PC-9 (cell line): ENCODE measurements at regions of chr1 and their contacts with region 1.

Region 1: GRCh38 chr1:183622884-183623785 is 12.4 kb downstream of the ARPC5 start:
- DNase-seq: peak; percentile 60 to 65
- H3K4me3 ChIP-seq: no peak overlapping the region
- H3K27ac ChIP-seq: peak overlapping the region; percentile 64
- H3K4me1 ChIP-seq: peaks cover 33% of the 10 kb centered on the region
- H3K27me3 ChIP-seq: no peaks in the 10 kb centered on the region
- CTCF ChIP-seq: peak; percentile 87

Region 2: GRCh38 chr1:182604169-182605164 is 1018.7 kb before region 1 on chr1 and contains the start of gene RGS16:
- CTCF ChIA-PET with region 1: no interaction called
- POLR2A ChIA-PET with region 1: no interaction called
- intact Hi-C with region 1: loop called (anchors 5 kb)
- DNase-seq: peak; percentile 62 to 80
- H3K4me3 ChIP-seq: peak within 1 kb of the TSS; percentile 69
- H3K27ac ChIP-seq: no peak within 1 kb of the TSS
- H3K4me1 ChIP-seq: peaks cover 15% of the 10 kb centered on the region
- H3K27me3 ChIP-seq: no peaks in the 10 kb centered on the region
- CTCF ChIP-seq: no peak
- total RNA-seq, gene RGS16: 0.25 TPM in 1 of 2 replicates, not detected in the other

Region 3: GRCh38 chr1:182855911-182856310 is 767.2 kb before region 1 on chr1:
- CTCF ChIA-PET with region 1: no interaction called
- POLR2A ChIA-PET with region 1: no interaction called
- intact Hi-C with region 1: loop called (anchors 10 kb)
- DNase-seq: no peak
- H3K4me3 ChIP-seq: no peak overlapping the region
- H3K27ac ChIP-seq: no peak overlapping the region
- H3K4me1 ChIP-seq: no peaks in the 10 kb centered on the region
- H3K27me3 ChIP-seq: no peaks in the 10 kb centered on the region
- CTCF ChIP-seq: no peak

Region 4: DNA sequence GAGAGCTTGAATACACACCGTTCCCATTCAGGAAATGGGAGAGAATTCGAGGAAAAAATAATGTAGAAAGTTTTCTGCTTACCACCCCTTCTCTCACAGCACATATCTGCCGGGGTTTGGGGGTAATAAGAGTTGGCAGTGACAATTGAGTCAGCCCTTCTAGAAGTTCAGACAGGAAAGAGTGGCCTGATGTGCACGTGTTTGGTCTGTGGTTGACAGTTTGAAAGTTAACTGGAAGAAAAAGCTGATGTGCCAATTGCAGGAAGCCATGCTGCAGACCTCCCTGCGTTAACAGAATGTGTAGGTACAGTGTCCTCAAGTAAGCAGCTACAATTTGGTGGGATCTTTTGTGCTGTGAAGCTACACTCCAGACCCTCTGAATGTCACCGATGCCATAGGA is 733.1 kb before region 1 on chr1:
- CTCF ChIA-PET with region 1: no interaction called
- POLR2A ChIA-PET with region 1: no interaction called
- intact Hi-C with region 1: loop called (anchors 10 kb)
- DNase-seq: no peak
- H3K4me3 ChIP-seq: no peak overlapping the region
- H3K27ac ChIP-seq: no peak overlapping the region
- H3K4me1 ChIP-seq: peaks cover 13% of the 10 kb centered on the region
- H3K27me3 ChIP-seq: no peaks in the 10 kb centered on the region
- CTCF ChIP-seq: no peak

Region 5: GRCh38 chr1:183195142-183195574 is 428.0 kb before region 1 on chr1:
- CTCF ChIA-PET with region 1: no interaction called
- POLR2A ChIA-PET with region 1: no interaction called
- intact Hi-C with region 1: no loop called
- DNase-seq: peak; percentile 34 to 86
- H3K4me3 ChIP-seq: no peak overlapping the region
- H3K27ac ChIP-seq: peak overlapping the region; percentile 89
- H3K4me1 ChIP-seq: peaks cover 26% of the 10 kb centered on the region
- H3K27me3 ChIP-seq: no peaks in the 10 kb centered on the region
- CTCF ChIP-seq: no peak

Region 6: DNA sequence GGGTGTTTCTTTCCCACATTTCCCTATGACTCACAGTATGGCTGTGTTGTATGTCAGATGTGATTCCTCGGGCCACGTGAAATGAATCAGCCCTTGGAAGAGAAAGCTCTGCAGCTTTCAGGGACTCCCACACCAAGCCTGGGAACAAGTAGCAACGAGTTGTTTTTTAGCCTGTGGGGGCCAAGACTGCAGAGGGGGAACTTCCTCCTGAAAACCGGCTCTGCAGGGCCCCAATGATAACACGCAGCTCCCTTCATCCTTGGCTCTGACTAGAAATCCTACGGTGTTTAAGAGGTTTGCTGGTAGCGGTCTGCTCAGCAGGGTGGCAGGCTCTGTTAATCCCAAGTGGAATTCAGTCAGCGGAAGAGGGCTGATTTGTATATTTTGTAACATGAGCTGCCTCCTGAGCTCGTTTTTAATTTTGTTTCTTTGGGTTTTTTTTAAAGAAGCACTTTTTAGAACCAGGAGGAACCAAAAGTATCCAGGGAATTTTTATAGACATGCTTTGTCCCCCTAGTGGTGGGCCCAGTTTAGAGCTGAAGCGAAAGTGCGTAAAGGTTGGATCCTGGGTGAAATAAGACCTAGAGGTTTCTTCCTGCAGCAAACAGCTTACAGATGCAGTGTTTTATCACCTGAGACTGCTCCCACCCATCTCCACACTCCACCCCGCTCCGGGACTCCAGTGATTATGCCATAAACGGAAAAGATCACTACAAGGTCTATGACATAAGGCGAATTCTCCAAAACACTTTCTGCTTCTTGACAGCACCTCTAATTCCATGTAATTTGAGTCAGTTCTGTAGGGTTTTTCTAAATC is 388.3 kb before region 1 on chr1:
- CTCF ChIA-PET with region 1: interaction called, 3 read pairs
- POLR2A ChIA-PET with region 1: no interaction called
- intact Hi-C with region 1: loop called (anchors 2 kb)
- DNase-seq: peak; percentile 81 to 96
- H3K4me3 ChIP-seq: peak overlapping the region; percentile 45; the same call in 1 of the 2 replicates
- H3K27ac ChIP-seq: peak overlapping the region; percentile 92
- H3K4me1 ChIP-seq: peaks cover 41% of the 10 kb centered on the region
- H3K27me3 ChIP-seq: no peaks in the 10 kb centered on the region
- CTCF ChIP-seq: peak; percentile 77

Region 7: DNA sequence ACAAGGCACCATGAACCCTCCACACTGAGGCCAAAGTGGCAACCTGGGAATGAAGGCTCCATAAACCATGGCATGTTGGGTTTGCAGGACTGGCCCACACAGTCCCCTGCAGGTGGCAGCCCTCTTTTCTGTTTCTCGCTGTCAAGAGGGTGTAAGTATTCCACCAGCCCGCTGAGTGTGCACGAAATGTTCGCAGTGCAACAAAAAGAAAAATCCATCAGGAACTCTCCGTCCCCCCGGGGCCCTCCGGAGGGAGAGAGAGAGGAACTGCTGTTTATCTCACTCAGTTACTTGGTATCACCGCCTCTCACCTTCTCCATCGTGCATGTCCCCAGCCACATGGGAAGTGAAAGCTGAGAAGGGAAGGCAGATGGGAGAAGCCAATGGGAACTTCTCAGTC is 71.2 kb before region 1 on chr1:
- CTCF ChIA-PET with region 1: no interaction called
- POLR2A ChIA-PET with region 1: no interaction called
- intact Hi-C with region 1: loop called (anchors 2 kb)
- DNase-seq: no peak
- H3K4me3 ChIP-seq: no peak overlapping the region
- H3K27ac ChIP-seq: no peak overlapping the region
- H3K4me1 ChIP-seq: no peaks in the 10 kb centered on the region
- H3K27me3 ChIP-seq: no peaks in the 10 kb centered on the region
- CTCF ChIP-seq: no peak

Region 8: DNA sequence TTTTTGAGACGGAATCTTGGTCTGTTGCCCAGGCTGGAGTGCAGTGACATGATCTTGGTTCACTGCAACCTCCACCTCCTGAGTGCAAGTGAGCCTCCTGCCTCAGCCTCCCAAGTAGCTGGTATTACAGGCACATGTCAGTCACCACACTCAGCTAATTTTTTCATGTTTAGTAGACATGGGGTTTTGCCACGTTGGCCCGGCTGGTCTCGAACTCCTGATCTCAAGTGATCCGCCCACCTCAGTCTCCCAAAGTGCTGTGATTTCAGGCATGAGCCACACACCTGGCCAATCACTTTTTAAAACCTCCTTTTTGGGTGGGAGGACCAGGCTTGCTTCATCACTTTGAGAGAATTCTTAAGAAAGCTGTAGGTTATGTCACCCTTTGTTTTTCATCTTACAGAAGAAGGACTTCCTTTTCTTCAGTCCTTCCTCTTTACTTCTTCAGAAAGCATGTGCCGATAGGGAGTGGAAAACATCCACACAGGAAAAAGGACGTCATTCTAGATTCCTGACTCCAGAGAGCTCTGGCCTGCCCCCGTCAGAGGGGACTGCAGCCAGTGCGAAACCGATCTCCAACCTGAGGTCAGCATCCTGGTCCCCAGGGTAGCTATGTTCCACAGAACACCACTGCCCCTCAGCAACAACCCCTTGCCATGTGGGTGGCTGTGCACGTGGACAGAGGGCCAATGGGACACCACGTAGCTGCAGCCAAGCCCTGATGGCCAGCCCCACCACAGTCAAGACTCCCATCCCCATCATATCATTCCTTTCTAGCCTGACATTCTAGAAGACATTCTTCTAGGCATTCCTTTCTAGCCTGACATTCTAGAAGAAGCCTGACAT is 54.7 kb before region 1 on chr1:
- CTCF ChIA-PET with region 1: no interaction called
- POLR2A ChIA-PET with region 1: interaction called, 6 read pairs
- intact Hi-C with region 1: loop called (anchors 2 kb)
- DNase-seq: peak in 1 of 2 experiments; percentile 38
- H3K4me3 ChIP-seq: peak overlapping the region; percentile 53; the same call in 1 of the 2 replicates
- H3K27ac ChIP-seq: peak overlapping the region; percentile 94
- H3K4me1 ChIP-seq: peaks cover 35% of the 10 kb centered on the region
- H3K27me3 ChIP-seq: no peaks in the 10 kb centered on the region
- CTCF ChIP-seq: no peak